ENCODE measurements at regions of chr10 and their contacts with region 1.

Region 1: GRCh38 chr10:72337020-72337629 is 17.6 kb downstream of the DNAJB12 start:
- DNase-seq: peak; percentile 78 to 88 (median 82)
- H3K4me3 ChIP-seq: peak overlapping the region in 1 of 59 donors; percentile 3
- H3K27ac ChIP-seq: peak overlapping the region; percentile 38 to 99 (median 95)
- H3K27me3 ChIP-seq: no peaks in the 10 kb centered on the region
- CTCF ChIP-seq: peak; percentile 71 to 99 (median 97)

Region 2: DNA sequence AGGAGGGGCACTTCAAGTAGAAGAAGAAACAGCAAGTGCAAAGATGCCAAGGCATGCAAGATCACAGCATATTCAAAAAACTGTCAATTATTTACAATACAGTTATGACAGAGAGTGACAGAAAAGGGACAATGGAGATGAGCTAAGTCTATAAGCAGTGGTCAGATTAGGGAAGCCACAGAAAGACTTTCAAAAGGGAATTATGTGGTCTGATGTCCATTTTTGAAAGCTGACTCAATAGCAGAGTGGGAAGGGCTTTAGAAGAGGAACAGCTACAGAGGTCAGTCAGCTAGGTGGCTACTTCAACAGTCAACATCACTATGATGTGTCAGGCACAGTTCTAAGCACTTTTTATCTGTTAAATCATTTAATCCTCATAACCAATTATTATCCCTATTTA is 203.6 kb before region 1 on chr10:
- intact Hi-C with region 1: loop called (anchors 2 to 5 kb)
- DNase-seq: no peak
- H3K4me3 ChIP-seq: no peak overlapping the region
- H3K27ac ChIP-seq: peak overlapping the region in 35 of 59 donors; percentile 2 to 79 (median 48)
- H3K27me3 ChIP-seq: no peaks in the 10 kb centered on the region
- CTCF ChIP-seq: no peak

Region 3: DNA sequence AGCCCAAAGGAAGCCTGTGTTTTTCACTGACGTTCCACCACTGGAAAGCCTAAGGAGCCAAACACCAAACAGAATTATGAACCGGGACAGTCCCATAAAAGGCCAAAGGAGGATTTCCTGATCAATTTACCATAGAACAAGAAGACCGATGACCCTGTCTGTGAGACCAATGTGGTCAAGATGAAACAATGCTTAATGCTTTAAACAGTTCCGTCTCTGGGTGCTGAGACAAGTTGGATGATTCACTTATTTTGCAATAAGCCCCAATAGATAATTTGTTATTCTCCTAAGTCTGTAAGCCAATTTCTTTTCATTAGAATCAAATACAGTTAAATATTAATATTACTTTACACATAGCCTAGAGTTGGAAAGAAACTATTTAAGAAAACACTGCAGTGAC is 153.8 kb after region 1 on chr10:
- intact Hi-C with region 1: no loop called
- DNase-seq: no peak
- H3K4me3 ChIP-seq: no peak overlapping the region
- H3K27ac ChIP-seq: no peak overlapping the region
- H3K27me3 ChIP-seq: no peaks in the 10 kb centered on the region
- CTCF ChIP-seq: no peak